ENCODE measurements at regions of chr10 and their contacts with region 1.

Region 1: GRCh38 chr10:92544296-92544695 is 29.6 kb downstream of the IDE start:
- DNase-seq: peak in 1 of 2 experiments; percentile 14
- H3K4me3 ChIP-seq: no peak overlapping the region
- H3K27ac ChIP-seq: no peak overlapping the region
- H3K4me1 ChIP-seq: 0 out of 2 replicates have a peak, but pooled peaks cover 7% of the 10 kb centered on the region
- H3K27me3 ChIP-seq: no peaks in the 10 kb centered on the region
- CTCF ChIP-seq: no peak

Region 2: GRCh38 chr10:92567952-92568600 is 23.8 kb after region 1 on chr10:
- CTCF ChIA-PET with region 1: no interaction called
- POLR2A ChIA-PET with region 1: interaction called, 10 read pairs
- intact Hi-C with region 1: no loop called
- DNase-seq: peak in 1 of 2 experiments; percentile 79
- H3K4me3 ChIP-seq: no peak overlapping the region
- H3K27ac ChIP-seq: peak overlapping the region; percentile 52
- H3K4me1 ChIP-seq: peaks cover 27% of the 10 kb centered on the region
- H3K27me3 ChIP-seq: no peaks in the 10 kb centered on the region
- CTCF ChIP-seq: no peak

Region 3: GRCh38 chr10:92886334-92886961 is 342.2 kb after region 1 on chr10:
- CTCF ChIA-PET with region 1: interaction called, 15 read pairs
- POLR2A ChIA-PET with region 1: no interaction called
- intact Hi-C with region 1: no loop called
- DNase-seq: no peak
- H3K4me3 ChIP-seq: no peak overlapping the region
- H3K27ac ChIP-seq: no peak overlapping the region
- H3K4me1 ChIP-seq: peaks cover 16% of the 10 kb centered on the region
- H3K27me3 ChIP-seq: no peaks in the 10 kb centered on the region
- CTCF ChIP-seq: no peak

Region 4: GRCh38 chr10:93702211-93703001 is 1158.1 kb after region 1 on chr10 and contains the start of gene FRA10AC1:
- CTCF ChIA-PET with region 1: interaction called, 17 read pairs
- POLR2A ChIA-PET with region 1: no interaction called
- intact Hi-C with region 1: no loop called
- DNase-seq: peak; percentile 70 to 82
- H3K4me3 ChIP-seq: peak within 1 kb of the TSS; percentile 77
- H3K27ac ChIP-seq: peak within 1 kb of the TSS; percentile 84
- H3K4me1 ChIP-seq: 0 out of 2 replicates have a peak, but pooled peaks cover 10% of the 10 kb centered on the region
- H3K27me3 ChIP-seq: no peaks in the 10 kb centered on the region
- CTCF ChIP-seq: peak; percentile 59
- total RNA-seq, gene FRA10AC1: 5.4 and 10.4 TPM in 2 replicates

Measured in PC-9 (cell line).